ENCODE measurements at regions of chr12 and their contacts with region 1.

Region 1: DNA sequence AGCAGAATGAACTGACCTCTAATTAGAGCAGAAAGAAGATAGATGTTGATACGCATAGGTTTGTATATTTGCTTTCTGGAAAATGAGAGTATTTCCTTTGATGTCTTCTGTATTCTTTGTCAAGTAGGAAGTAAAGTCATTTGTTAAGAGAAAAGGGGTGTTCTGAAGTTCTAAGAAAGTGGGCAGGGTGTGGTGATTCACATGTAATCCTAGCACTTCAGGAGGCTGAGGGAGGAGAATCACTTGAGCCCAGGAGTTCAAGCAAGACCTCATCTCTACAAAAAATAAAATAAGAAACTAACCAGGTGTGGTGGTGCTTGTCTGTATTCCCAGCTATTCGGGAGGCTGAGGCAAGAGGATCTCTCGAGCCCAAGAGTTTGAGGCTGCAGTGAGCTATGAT is 2.8 kb downstream of the RHNO1 start:
- DNase-seq: no peak
- H3K27ac ChIP-seq: no peak overlapping the region
- CTCF ChIP-seq: no peak

Region 2: DNA sequence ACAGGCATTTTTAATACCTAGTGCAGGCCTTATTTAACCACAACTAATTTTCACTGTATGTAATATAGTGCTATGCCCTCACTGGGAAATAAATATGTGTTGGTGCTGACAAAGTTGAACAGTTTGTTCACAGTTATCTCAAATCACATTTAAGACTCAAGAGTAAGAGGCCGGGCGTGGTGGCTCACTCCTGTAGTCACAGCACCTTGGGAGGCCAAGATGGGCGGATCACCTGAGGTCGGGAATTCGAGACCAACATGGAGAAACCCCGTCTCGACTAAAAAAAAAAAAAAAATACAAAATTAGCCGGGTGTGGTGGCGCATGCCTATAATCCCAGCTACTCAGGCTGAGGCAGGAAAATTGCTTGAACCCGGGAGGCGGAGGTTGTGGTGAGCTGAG is 56.4 kb after region 1 on chr12:
- CTCF ChIA-PET with region 1: interaction called, 10 read pairs
- POLR2A ChIA-PET with region 1: no interaction called
- DNase-seq: no peak
- H3K27ac ChIP-seq: no peak overlapping the region
- CTCF ChIP-seq: no peak

Measured in RWPE1 (cell line).